ENCODE measurements at regions of chr3 and their contacts with region 1.

Region 1: DNA sequence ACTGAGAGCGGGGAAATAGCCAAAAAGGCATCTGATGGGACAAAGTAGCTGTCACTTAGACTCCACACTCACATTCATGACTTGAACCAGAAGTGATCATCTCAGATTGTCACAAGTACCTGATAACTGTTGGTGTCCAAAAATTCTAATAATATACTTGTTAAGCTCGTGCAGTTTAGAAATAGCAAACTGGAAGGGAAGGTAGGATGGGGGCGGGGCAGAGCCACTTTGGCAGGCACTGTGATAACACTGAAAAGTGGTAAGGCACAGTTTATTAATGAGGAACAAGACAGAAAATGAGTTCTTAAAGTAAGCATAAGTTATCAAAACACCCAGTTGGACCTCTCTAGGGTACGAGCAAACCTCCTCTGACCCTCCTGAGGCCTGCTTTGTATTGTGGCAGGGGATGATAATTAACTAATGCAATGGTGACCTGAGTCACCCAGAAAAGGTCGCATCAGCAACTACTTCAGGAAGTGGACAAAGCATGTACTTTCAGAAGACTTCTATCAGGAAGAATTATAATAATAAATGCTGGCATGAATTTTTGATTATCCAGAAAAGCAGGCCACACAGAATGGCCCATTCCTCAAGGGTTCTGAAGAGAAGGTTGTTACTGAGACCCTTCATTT is 54.4 kb downstream of the ADCY5 start:
- DNase-seq: no peak

Region 2: DNA sequence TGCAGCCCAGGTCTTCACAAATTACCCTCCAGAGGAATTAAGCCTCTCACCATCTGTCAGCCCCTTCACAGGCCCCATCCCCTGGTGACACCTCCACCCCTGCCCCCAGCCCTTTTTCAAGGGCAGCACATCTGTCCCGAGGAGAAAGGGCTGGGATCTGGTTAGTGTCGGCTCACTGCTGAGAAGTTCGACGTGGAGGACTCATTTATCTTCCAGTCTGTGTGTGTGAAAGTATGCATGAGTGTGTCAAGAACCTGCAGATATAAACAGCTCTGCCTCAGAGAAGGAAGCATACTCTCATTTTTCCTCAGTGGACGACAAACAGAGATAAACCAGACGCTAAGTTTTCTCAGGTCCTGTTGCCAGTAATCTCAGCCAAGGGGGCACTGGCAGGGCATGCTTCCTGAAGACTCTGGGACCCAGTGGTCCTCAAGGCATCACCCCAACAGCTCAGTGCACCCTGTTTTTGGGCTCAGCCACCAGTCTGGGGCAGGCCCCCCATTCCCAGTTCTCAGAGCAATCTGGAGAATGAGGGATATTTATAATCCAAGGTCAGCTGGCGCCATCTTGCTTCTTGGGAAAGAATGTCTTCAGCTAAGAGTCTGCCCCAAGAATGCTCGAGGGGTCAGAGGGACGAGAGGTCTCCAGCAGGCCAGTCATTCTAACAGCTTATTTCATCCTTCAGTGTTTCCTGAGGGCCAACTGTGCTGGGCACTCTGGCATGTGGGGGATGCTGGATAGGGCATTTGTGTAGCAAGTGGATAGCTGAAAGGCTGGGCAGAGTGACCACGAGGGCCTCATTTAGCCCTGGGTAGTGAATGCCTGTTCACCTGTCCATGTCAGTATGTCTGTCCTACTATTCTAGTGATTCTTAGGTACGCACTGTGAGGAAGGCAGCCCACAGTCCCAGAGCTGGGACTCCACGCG is 19.2 kb before region 1 on chr3:
- intact Hi-C with region 1: loop called (anchors 2 kb)
- DNase-seq: peak; percentile 66